T-cell (primary cell): ENCODE measurements at regions of chr22 and their contacts with region 1.

Region 1: GRCh38 chr22:24471570-24471969 is 23.6 kb upstream of the UPB1 start:
- DNase-seq: no peak
- ATAC-seq: no peak
- H3K4me3 ChIP-seq: no peak overlapping the region
- H3K4me3 Mint-ChIP-seq: no peak overlapping the region
- H3K27ac ChIP-seq: no peak overlapping the region
- H3K27ac Mint-ChIP-seq: no peak overlapping the region
- H3K4me1 ChIP-seq: no peaks in the 10 kb centered on the region
- H3K4me1 Mint-ChIP-seq: peaks cover 0 to 2% (median 0%) of the 10 kb centered on the region in 3 donors
- H3K27me3 ChIP-seq: no peaks in the 10 kb centered on the region
- H3K27me3 Mint-ChIP-seq: no peaks in the 10 kb centered on the region

Region 2: DNA sequence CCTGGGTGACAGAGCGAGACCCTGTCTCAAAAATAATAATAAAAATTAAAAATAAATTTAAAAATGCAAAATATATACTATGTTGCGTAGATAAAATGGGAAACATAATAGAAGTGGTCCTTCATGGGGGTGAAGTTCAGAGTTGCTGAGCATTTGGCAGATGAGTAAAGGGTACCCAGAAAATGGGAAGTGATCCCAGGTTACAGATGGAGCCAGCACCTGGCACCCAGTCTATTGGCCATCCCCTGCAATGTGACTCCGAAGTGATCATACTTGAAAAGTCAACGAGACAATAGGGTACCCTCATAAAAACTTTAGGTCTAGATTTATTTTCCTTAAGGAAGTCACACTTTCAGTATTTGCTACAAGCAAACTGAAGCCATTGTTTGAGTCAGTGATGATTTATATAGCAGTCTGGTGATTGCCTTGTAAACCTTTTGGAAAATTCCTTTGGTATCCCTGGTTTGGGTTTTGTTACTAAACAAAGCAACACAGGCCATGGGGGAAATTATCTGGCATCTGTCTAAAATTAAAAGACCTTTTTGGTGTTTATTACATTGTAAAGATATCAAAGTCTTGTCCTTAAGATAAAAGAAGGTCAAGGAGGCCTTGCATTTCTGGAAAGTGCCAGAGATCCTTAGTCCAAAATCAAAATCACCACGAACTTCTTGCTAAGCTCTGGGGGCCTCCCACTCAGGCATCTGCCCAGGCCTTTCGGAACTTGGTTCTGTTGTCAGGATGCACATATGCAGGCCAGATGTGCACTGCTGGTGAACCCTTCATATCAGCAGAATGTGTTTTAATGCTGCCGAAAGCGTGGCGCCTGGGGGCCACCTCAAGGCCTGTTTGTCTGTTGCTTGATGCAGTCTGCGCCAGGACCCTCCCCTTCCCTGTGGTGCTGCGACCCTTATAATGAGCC is 680.5 kb before region 1 on chr22:
- CTCF ChIA-PET with region 1: no interaction called
- POLR2A ChIA-PET with region 1: no interaction called
- DNase-seq: no peak
- ATAC-seq: no peak
- H3K4me3 ChIP-seq: no peak overlapping the region
- H3K4me3 Mint-ChIP-seq: no peak overlapping the region
- H3K27ac ChIP-seq: no peak overlapping the region
- H3K27ac Mint-ChIP-seq: no peak overlapping the region
- H3K4me1 ChIP-seq: peaks cover 15 to 53% of the 10 kb centered on the region in 2 experiments
- H3K4me1 Mint-ChIP-seq: peaks cover 41 to 48% (median 46%) of the 10 kb centered on the region in 3 donors
- H3K27me3 ChIP-seq: no peaks in the 10 kb centered on the region
- H3K27me3 Mint-ChIP-seq: no peaks in the 10 kb centered on the region

Region 3: GRCh38 chr22:24420977-24421931 is 50.3 kb before region 1 on chr22:
- CTCF ChIA-PET with region 1: no interaction called
- POLR2A ChIA-PET with region 1: interaction called in 1 of 2 experiments, 11 read pairs
- DNase-seq: peak in 23 of 35 experiments; percentile 19 to 64 (median 37)
- ATAC-seq: peak; percentile 32 to 59 (median 34)
- H3K4me3 ChIP-seq: no peak overlapping the region
- H3K4me3 Mint-ChIP-seq: peak overlapping the region; percentile 25 to 58 (median 48)
- H3K27ac ChIP-seq: no peak overlapping the region
- H3K27ac Mint-ChIP-seq: peak overlapping the region in 1 of 2 donors; percentile 23
- H3K4me1 ChIP-seq: peaks cover 6 to 31% of the 10 kb centered on the region in 2 experiments
- H3K4me1 Mint-ChIP-seq: peaks cover 17 to 22% (median 20%) of the 10 kb centered on the region in 3 donors
- H3K27me3 ChIP-seq: peaks cover 0 to 10% of the 10 kb centered on the region in 2 experiments
- H3K27me3 Mint-ChIP-seq: peaks cover 0 to 3% of the 10 kb centered on the region in 2 donors

Region 4: DNA sequence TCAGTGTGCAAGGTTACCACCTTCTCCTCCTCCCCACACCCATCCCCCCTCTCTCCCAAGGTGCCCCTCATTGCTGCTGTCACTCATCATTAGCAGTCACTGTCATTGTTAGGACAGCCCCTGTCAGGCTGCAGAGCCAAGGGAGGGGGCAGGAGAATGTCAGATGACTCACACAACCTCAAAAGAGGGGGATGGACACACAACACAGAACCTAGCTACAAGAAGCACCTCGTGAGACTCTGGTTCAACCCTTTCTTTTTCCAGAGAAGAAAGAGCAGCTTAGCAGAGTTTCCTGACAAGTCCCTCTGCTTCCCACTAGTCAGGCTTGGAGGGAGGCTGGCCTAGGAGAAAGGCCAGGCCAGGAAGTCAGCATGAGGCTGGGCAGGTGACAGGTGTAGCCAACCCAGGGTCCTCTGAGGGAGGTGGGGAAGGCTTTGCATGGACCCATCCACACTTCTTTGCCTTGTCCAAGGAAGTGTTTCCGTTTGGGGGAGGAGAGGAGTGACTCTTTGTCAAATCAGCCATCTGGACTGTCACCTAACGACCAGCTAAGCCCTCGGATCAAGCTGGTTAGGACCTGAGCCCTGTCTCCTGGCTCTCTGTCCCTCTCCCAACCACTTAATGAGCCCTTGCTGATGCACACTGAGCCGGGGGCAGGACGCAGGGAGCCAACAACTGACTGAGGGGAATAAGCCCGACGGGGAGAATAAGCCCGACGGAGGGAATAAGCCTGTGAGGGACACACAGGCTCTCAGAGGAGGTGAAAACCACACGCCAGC is 25.9 kb before region 1 on chr22:
- CTCF ChIA-PET with region 1: no interaction called
- POLR2A ChIA-PET with region 1: no interaction called
- DNase-seq: no peak
- ATAC-seq: peak in 2 of 4 experiments; percentile 36 to 55
- H3K4me3 ChIP-seq: no peak overlapping the region
- H3K4me3 Mint-ChIP-seq: no peak overlapping the region
- H3K27ac ChIP-seq: no peak overlapping the region
- H3K27ac Mint-ChIP-seq: peak overlapping the region in 1 of 2 donors; percentile 58
- H3K4me1 ChIP-seq: peaks cover 5 to 24% of the 10 kb centered on the region in 2 experiments
- H3K4me1 Mint-ChIP-seq: peaks cover 26 to 40% (median 31%) of the 10 kb centered on the region in 3 donors
- H3K27me3 ChIP-seq: no peaks in the 10 kb centered on the region
- H3K27me3 Mint-ChIP-seq: no peaks in the 10 kb centered on the region